Activated naive CD4-positive, alpha-beta T cell treated with anti-CD3 and anti-CD28 coated beads, Interleukin-2, amount 10 ng/mL, durations not matched to agents 7 days and 5 days (primary cell): ENCODE measurements at regions of chr16 and their contacts with region 1.

Region 1: GRCh38 chr16:28067604-28068379 is 4.3 kb upstream of the GSG1L start:
- DNase-seq: no peak
- H3K4me3 Mint-ChIP-seq: no peak overlapping the region
- H3K27ac Mint-ChIP-seq: no peak overlapping the region
- H3K4me1 Mint-ChIP-seq: no peaks in the 10 kb centered on the region
- H3K27me3 Mint-ChIP-seq: peaks cover 55% of the 10 kb centered on the region

Region 2: GRCh38 chr16:27824786-27825185 is 243.0 kb before region 1 on chr16:
- CTCF ChIA-PET with region 1: no interaction called
- DNase-seq: no peak
- H3K4me3 Mint-ChIP-seq: no peak overlapping the region
- H3K27ac Mint-ChIP-seq: no peak overlapping the region
- H3K4me1 Mint-ChIP-seq: no peaks in the 10 kb centered on the region
- H3K27me3 Mint-ChIP-seq: no peaks in the 10 kb centered on the region

Region 3: GRCh38 chr16:27972500-27972899 is 95.3 kb before region 1 on chr16:
- CTCF ChIA-PET with region 1: interaction called, 63 read pairs
- DNase-seq: peak; percentile 74
- H3K4me3 Mint-ChIP-seq: no peak overlapping the region
- H3K27ac Mint-ChIP-seq: no peak overlapping the region
- H3K4me1 Mint-ChIP-seq: peaks cover 4% of the 10 kb centered on the region
- H3K27me3 Mint-ChIP-seq: peaks cover 30% of the 10 kb centered on the region

Region 4: DNA sequence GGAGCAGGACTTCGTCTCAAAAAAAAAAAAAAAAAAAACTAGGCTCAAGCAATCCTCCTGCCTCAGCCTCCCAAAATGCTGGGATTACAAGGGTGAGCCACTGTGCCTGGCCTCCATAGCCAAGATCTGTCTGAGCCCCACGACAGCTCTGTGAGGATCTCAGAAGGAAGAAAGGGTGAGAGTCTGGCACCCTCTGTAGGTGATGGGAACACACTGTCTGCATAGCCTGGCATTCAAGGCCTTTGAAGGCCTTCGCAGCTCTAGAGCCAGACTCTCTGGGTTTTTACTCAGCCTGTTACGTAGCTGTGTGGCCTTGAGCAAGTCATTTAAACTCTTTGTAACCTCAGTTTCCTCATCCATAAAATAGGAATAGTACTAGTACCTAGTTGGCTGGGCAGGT is 150.3 kb after region 1 on chr16:
- CTCF ChIA-PET with region 1: interaction called, 11 read pairs
- DNase-seq: peak; percentile 80
- H3K4me3 Mint-ChIP-seq: no peak overlapping the region
- H3K27ac Mint-ChIP-seq: no peak overlapping the region
- H3K4me1 Mint-ChIP-seq: peaks cover 11% of the 10 kb centered on the region
- H3K27me3 Mint-ChIP-seq: no peaks in the 10 kb centered on the region